ENCODE measurements at regions of chr2 and their contacts with region 1.

Region 1: GRCh38 chr2:11784747-11785610 is 38.5 kb downstream of the LPIN1 start:
- DNase-seq: no peak
- ATAC-seq: peak; percentile 86
- H3K4me3 ChIP-seq: no peak overlapping the region
- H3K27ac ChIP-seq: no peak overlapping the region
- H3K4me1 ChIP-seq: no peaks in the 10 kb centered on the region
- H3K27me3 ChIP-seq: no peaks in the 10 kb centered on the region
- CTCF ChIP-seq: peak; percentile 60 to 95 (median 79)
- EP300 ChIP-seq: no peak
- POLR2A ChIP-seq: no peak
- RAD21 ChIP-seq: no peak; the same call in 1 of the 2 replicates

Region 2: GRCh38 chr2:11799826-11800225 is 14.8 kb after region 1 on chr2:
- CTCF ChIA-PET with region 1: interaction called, 18 read pairs
- POLR2A ChIA-PET with region 1: no interaction called
- RAD21 ChIA-PET with region 1: no interaction called
- SMC1A ChIA-PET with region 1: interaction called, 5 read pairs
- in situ Hi-C with region 1: no loop called
- intact Hi-C with region 1: no loop called
- DNase-seq: no peak
- ATAC-seq: no peak
- H3K4me3 ChIP-seq: no peak overlapping the region
- H3K27ac ChIP-seq: no peak overlapping the region
- H3K4me1 ChIP-seq: no peaks in the 10 kb centered on the region
- H3K27me3 ChIP-seq: no peaks in the 10 kb centered on the region
- CTCF ChIP-seq: no peak
- EP300 ChIP-seq: no peak
- POLR2A ChIP-seq: no peak
- RAD21 ChIP-seq: no peak

Measured in GM12878 (cell line).